AG04449 (cell line): ENCODE measurements at regions of chr7 and their contacts with region 1.

Region 1: GRCh38 chr7:128455551-128456254 is at the start of gene HILPDA:
- DNase-seq: peak; percentile 82
- H3K4me3 ChIP-seq: peak within 1 kb of the TSS; percentile 99
- CTCF ChIP-seq: no peak

Region 2: GRCh38 chr7:128409596-128410160 is 46.0 kb before region 1 on chr7 and contains the start of gene IMPDH1:
- CTCF ChIA-PET with region 1: interaction called, 51 read pairs
- POLR2A ChIA-PET with region 1: interaction called, 4 read pairs
- DNase-seq: no peak
- H3K4me3 ChIP-seq: peak within 1 kb of the TSS; percentile 85
- CTCF ChIP-seq: no peak

Region 3: DNA sequence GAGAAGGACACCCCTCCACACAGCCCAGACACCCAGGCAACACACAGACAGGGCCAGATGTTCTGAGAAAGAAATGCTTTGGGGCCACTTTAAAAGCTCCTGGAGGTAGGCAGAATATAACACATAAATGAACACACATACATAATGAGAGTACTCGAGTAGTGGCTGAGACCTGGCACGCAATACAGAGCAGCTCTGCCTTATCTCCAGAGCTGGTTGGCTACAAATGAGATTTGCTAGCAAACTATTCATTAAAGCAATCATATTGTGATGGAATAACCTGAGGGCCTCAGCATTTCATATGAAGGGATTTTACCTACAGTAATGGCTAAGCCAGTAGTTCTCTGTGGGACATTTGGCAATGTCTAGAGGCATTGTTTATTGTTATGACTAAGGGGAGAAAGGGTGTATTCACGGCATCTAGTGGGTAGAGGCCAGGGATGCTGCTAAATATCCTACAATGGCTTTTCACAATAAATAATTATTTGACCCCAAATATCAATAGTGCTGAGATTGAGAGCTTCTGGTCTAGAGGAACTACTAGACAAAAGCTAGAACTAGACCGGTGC is 40.4 kb before region 1 on chr7:
- CTCF ChIA-PET with region 1: interaction called, 51 read pairs
- POLR2A ChIA-PET with region 1: interaction called, 4 read pairs
- DNase-seq: no peak
- H3K4me3 ChIP-seq: no peak overlapping the region
- CTCF ChIP-seq: no peak

Region 4: GRCh38 chr7:128443831-128444600 is 11.7 kb before region 1 on chr7:
- CTCF ChIA-PET with region 1: interaction called, 35 read pairs
- POLR2A ChIA-PET with region 1: interaction called, 6 read pairs
- DNase-seq: no peak
- H3K4me3 ChIP-seq: no peak overlapping the region
- CTCF ChIP-seq: no peak